ENCODE measurements at regions of chr17 and their contacts with region 1.

Region 1: DNA sequence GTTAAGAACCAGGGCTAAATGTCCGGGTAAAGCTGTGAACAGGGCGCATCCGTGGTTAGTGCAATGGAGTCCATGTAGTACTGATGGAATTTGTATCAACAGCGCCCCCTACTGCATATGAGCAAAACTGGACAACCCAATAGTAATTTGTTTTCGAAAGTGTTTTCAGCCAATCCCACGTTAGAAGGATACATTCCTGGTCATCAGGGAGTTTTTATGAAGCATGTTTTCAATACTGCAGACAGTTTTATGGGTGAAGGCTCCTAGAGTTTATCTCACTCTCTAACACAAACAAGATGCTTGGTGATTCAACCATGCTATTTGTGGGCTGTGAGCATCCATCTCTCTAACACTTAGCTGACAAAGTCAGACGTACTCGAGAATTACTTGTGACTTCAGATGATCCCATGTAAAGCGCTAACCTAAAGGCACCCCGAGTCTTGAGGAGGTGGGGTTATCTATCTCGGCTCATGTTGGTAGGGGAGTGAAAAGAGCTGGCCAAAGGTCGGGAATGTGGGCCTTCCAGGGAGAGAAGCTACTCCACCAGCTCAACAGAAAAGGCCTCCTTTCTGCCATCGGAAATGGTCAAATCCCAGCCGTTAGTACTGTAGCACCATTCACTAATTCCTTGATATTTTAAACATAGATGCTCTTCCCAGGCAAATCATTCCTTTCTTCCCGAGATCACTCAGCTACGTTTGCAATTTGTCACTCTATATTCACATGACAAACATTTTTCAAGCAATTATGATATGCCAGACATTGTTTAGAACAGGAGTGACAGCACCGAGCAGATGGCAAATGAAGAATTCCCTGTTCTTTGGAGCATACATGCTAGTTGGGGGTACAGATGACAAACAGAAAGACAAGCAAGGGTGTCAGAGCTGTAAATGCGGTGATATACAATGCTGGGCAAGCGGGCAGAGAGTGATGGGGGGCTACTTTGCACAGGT is 46.9 kb upstream of the HNF1B start:
- DNase-seq: no peak
- ATAC-seq: peak; percentile 98
- H3K4me3 ChIP-seq: no peak overlapping the region
- H3K27ac ChIP-seq: no peak overlapping the region
- H3K4me1 ChIP-seq: no peaks in the 10 kb centered on the region
- H3K27me3 ChIP-seq: no peaks in the 10 kb centered on the region
- CTCF ChIP-seq: peak; percentile 67 to 86 (median 82)
- EP300 ChIP-seq: no peak
- POLR2A ChIP-seq: no peak
- RAD21 ChIP-seq: peak; percentile 94

Region 2: GRCh38 chr17:37520174-37520573 is 271.5 kb before region 1 on chr17:
- CTCF ChIA-PET with region 1: no interaction called
- POLR2A ChIA-PET with region 1: interaction called, 5 read pairs
- RAD21 ChIA-PET with region 1: interaction called, 4 read pairs
- SMC1A ChIA-PET with region 1: no interaction called
- in situ Hi-C with region 1: loop called (anchors 5 kb)
- intact Hi-C with region 1: no loop called
- DNase-seq: no peak
- ATAC-seq: no peak
- H3K4me3 ChIP-seq: no peak overlapping the region
- H3K27ac ChIP-seq: no peak overlapping the region
- H3K4me1 ChIP-seq: no peaks in the 10 kb centered on the region
- H3K27me3 ChIP-seq: no peaks in the 10 kb centered on the region
- CTCF ChIP-seq: no peak
- EP300 ChIP-seq: no peak
- POLR2A ChIP-seq: no peak
- RAD21 ChIP-seq: no peak

Region 3: DNA sequence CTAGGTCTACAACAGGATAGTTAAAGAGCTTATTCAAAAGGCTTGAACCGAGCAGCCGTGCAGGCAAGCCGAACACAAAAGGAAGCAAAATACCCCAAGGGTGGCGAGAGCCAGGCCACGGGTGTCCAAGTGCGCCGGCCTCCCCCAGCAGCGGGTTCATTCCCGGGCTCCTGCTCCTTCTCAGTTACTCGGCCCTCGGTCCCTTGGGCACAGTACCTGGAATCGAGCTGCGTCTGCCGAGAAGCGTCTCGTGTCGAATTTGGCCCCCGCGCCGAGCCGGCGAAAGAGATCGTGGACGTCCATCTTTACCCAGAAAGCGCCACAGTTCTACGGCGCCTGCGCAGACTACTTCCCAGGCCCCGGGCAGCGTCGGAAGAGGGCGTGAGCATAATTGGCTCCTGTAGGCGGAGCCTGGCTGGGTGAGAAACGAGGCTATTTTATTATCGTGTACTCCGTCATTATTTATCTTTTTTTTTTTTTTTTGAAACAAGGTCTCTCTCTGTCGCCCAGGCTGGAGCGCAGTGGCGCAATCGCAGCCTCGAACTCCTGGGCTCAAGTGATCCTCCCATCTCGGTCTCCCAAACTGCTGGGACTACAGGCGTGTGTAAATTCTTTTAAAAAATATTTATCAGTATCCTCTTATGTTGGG is 148.5 kb before region 1 on chr17 and contains the start of gene DDX52:
- CTCF ChIA-PET with region 1: interaction called, 49 read pairs
- POLR2A ChIA-PET with region 1: no interaction called
- RAD21 ChIA-PET with region 1: interaction called, 12 read pairs
- SMC1A ChIA-PET with region 1: interaction called, 5 read pairs
- in situ Hi-C with region 1: loop called (anchors 5 kb)
- intact Hi-C with region 1: no loop called
- DNase-seq: peak; percentile 52
- ATAC-seq: peak; percentile 99
- H3K4me3 ChIP-seq: peak within 1 kb of the TSS; percentile 80
- H3K27ac ChIP-seq: peak within 1 kb of the TSS; percentile 58
- H3K4me1 ChIP-seq: no peaks in the 10 kb centered on the region
- H3K27me3 ChIP-seq: no peaks in the 10 kb centered on the region; a peak in 1 of 4 replicates
- CTCF ChIP-seq: no peak
- EP300 ChIP-seq: no peak
- POLR2A ChIP-seq: peak; percentile 88
- RAD21 ChIP-seq: no peak
- polyA plus RNA-seq, gene DDX52: 18.7 to 18.8 TPM

Region 4: GRCh38 chr17:37701496-37701898 is 90.2 kb before region 1 on chr17:
- CTCF ChIA-PET with region 1: interaction called, 78 read pairs
- POLR2A ChIA-PET with region 1: no interaction called
- RAD21 ChIA-PET with region 1: interaction called, 30 read pairs
- SMC1A ChIA-PET with region 1: interaction called, 41 read pairs
- in situ Hi-C with region 1: loop called (anchors 5 kb)
- intact Hi-C with region 1: loop called (anchors 1 kb)
- DNase-seq: peak; percentile 16
- ATAC-seq: peak; percentile 93
- H3K4me3 ChIP-seq: no peak overlapping the region
- H3K27ac ChIP-seq: no peak overlapping the region
- H3K4me1 ChIP-seq: no peaks in the 10 kb centered on the region
- H3K27me3 ChIP-seq: no peaks in the 10 kb centered on the region
- CTCF ChIP-seq: peak; percentile 78 to 81 (median 80)
- EP300 ChIP-seq: no peak
- POLR2A ChIP-seq: no peak
- RAD21 ChIP-seq: peak; percentile 75

Region 5: DNA sequence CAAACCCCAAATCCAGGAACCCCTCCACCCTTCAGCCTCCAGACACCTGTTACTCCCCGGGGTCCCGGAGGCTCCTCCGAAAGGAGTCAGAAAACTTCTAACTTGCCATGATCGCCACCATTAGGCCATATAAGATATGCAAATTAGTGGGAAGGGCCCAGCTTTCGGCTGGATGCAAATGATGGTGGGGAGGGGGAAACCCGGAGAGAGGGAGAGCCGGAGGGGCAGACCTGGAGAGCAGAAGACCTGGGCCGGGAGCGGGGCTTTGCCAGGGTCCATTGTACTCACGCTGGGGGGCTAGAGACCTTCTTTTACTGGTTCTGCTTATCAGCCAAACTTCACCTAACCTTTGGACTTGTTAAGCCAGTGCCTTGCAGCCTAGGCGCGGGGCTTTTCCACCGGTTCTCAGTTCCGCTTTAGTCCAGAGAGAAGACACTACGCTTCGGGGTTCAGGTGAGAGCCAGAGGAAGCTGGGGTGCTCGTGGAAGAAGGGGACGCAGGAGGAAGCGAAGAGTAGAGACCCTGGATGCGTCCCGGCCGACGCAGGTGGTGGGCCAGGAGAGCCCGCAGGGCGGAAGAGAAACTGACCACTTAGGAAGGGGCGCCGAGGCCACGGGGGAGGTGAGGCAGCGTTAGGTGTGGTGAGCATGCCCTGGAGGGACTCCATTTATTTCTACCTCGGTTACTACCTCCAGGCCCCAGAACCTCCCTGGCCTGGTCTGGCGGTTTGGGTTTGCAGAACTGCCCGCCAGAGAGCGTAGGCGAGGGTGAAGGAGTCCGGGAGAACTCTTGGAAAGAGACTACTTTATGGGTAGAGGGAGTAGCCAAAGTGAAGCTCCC is 46.5 kb before region 1 on chr17 and contains the start of gene HNF1B:
- CTCF ChIA-PET with region 1: interaction called, 9 read pairs
- POLR2A ChIA-PET with region 1: interaction called, 8 read pairs
- RAD21 ChIA-PET with region 1: interaction called, 15 read pairs
- SMC1A ChIA-PET with region 1: interaction called, 12 read pairs
- in situ Hi-C with region 1: no loop called
- intact Hi-C with region 1: no loop called
- DNase-seq: no peak
- ATAC-seq: peak; percentile 66
- H3K4me3 ChIP-seq: peak within 1 kb of the TSS; percentile 38; the same call in 1 of the 2 replicates
- H3K27ac ChIP-seq: peak within 1 kb of the TSS; percentile 56
- H3K4me1 ChIP-seq: peaks cover 42% of the 10 kb centered on the region
- H3K27me3 ChIP-seq: peaks cover 0 to 22% of the 10 kb centered on the region in 2 experiments; a peak in 2 of 4 replicates
- CTCF ChIP-seq: no peak
- EP300 ChIP-seq: peak in 1 of 2 experiments; percentile 88; a peak in 2 of 4 replicates
- POLR2A ChIP-seq: peak; percentile 36; the same call in 1 of the 2 replicates
- RAD21 ChIP-seq: no peak
- polyA plus RNA-seq, gene HNF1B: 0.51 to 0.93 TPM

Region 6: DNA sequence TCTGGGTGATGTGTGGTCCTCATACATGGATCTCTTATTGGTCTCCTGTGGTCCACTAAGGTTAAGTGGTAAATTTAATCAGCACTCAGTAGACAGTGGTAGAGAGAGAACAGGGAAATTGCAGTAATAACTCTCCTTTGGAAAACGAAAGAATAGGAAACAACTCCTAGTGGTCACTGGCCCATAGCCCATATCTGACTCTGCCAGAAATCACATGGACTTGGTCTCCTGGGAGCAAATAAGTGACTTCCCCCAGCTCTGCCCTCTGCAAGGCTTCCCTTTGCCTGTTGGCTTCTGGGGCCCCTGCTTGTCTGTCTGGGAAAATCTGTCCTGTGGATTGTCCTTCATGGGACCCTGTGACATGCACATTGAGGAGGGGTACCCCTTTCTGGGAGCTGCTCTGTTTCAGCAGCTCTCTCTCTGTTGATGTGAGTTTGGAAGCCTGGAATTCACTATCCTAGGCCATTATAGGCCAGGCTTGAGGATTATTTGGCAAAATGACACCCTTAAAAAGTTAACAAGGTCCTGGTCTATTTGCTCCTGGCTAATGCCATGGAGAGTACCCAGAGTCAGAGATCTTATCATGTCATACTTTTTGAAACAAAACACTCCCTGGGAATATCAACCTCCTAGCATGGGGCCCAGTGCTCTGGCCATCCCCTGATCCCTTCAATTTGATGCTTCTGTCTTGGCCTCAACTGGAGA is 11.1 kb after region 1 on chr17:
- CTCF ChIA-PET with region 1: interaction called, 12 read pairs
- POLR2A ChIA-PET with region 1: interaction called, 3 read pairs
- RAD21 ChIA-PET with region 1: interaction called, 4 read pairs
- SMC1A ChIA-PET with region 1: interaction called, 9 read pairs
- in situ Hi-C with region 1: no loop called
- intact Hi-C with region 1: no loop called
- DNase-seq: no peak
- ATAC-seq: no peak
- H3K4me3 ChIP-seq: no peak overlapping the region
- H3K27ac ChIP-seq: no peak overlapping the region
- H3K4me1 ChIP-seq: peaks cover 9% of the 10 kb centered on the region
- H3K27me3 ChIP-seq: no peaks in the 10 kb centered on the region
- CTCF ChIP-seq: no peak
- EP300 ChIP-seq: no peak
- POLR2A ChIP-seq: no peak
- RAD21 ChIP-seq: no peak

Region 7: GRCh38 chr17:37844158-37844976 is 52.6 kb after region 1 on chr17:
- CTCF ChIA-PET with region 1: interaction called, 22 read pairs
- POLR2A ChIA-PET with region 1: interaction called, 3 read pairs
- RAD21 ChIA-PET with region 1: interaction called, 10 read pairs
- SMC1A ChIA-PET with region 1: interaction called, 18 read pairs
- in situ Hi-C with region 1: no loop called
- intact Hi-C with region 1: no loop called
- DNase-seq: no peak
- ATAC-seq: peak; percentile 84
- H3K4me3 ChIP-seq: no peak overlapping the region
- H3K27ac ChIP-seq: no peak overlapping the region
- H3K4me1 ChIP-seq: peaks cover 28% of the 10 kb centered on the region
- H3K27me3 ChIP-seq: no peaks in the 10 kb centered on the region
- CTCF ChIP-seq: peak; percentile 69 to 90 (median 88)
- EP300 ChIP-seq: no peak
- POLR2A ChIP-seq: 0 out of 2 replicates have a peak, but pooled peaks have one; percentile 26
- RAD21 ChIP-seq: peak; percentile 85

Region 8: GRCh38 chr17:38403491-38403890 is 611.8 kb after region 1 on chr17:
- CTCF ChIA-PET with region 1: no interaction called
- POLR2A ChIA-PET with region 1: no interaction called
- RAD21 ChIA-PET with region 1: no interaction called
- SMC1A ChIA-PET with region 1: no interaction called
- in situ Hi-C with region 1: no loop called
- intact Hi-C with region 1: no loop called
- DNase-seq: no peak
- ATAC-seq: no peak
- H3K4me3 ChIP-seq: no peak overlapping the region
- H3K27ac ChIP-seq: no peak overlapping the region
- H3K4me1 ChIP-seq: no peaks in the 10 kb centered on the region
- H3K27me3 ChIP-seq: no peaks in the 10 kb centered on the region
- CTCF ChIP-seq: no peak
- EP300 ChIP-seq: no peak
- POLR2A ChIP-seq: no peak
- RAD21 ChIP-seq: no peak

Measured in GM12878 (cell line).